ENCODE measurements at regions of chr15 and their contacts with region 1.

Region 1: GRCh38 chr15:99928429-99928981 is 195.3 kb upstream of the LYSMD4 start:
- DNase-seq: peak; percentile 61
- ATAC-seq: peak; percentile 87
- H3K4me3 ChIP-seq: peak overlapping the region; percentile 63
- H3K27ac ChIP-seq: no peak overlapping the region
- H3K4me1 ChIP-seq: peaks cover 15% of the 10 kb centered on the region
- H3K27me3 ChIP-seq: 0 out of 2 replicates have a peak, but pooled peaks cover under 1% of the 10 kb centered on the region
- CTCF ChIP-seq: peak; percentile 36; the same call in 1 of the 2 replicates

Region 2: GRCh38 chr15:99704444-99704838 is 224.1 kb before region 1 on chr15:
- CTCF ChIA-PET with region 1: no interaction called
- POLR2A ChIA-PET with region 1: no interaction called
- intact Hi-C with region 1: no loop called
- DNase-seq: peak; percentile 93
- ATAC-seq: peak; percentile 61
- H3K4me3 ChIP-seq: no peak overlapping the region
- H3K27ac ChIP-seq: no peak overlapping the region
- H3K4me1 ChIP-seq: peaks cover 33% of the 10 kb centered on the region
- H3K27me3 ChIP-seq: no peaks in the 10 kb centered on the region
- CTCF ChIP-seq: peak; percentile 73

Region 3: GRCh38 chr15:99961011-99961441 is 32.5 kb after region 1 on chr15:
- CTCF ChIA-PET with region 1: no interaction called
- POLR2A ChIA-PET with region 1: no interaction called
- intact Hi-C with region 1: loop called (anchors 2 kb)
- DNase-seq: peak; percentile 56
- ATAC-seq: no peak
- H3K4me3 ChIP-seq: no peak overlapping the region
- H3K27ac ChIP-seq: no peak overlapping the region
- H3K4me1 ChIP-seq: peaks cover 21% of the 10 kb centered on the region
- H3K27me3 ChIP-seq: no peaks in the 10 kb centered on the region
- CTCF ChIP-seq: peak; percentile 57

Region 4: DNA sequence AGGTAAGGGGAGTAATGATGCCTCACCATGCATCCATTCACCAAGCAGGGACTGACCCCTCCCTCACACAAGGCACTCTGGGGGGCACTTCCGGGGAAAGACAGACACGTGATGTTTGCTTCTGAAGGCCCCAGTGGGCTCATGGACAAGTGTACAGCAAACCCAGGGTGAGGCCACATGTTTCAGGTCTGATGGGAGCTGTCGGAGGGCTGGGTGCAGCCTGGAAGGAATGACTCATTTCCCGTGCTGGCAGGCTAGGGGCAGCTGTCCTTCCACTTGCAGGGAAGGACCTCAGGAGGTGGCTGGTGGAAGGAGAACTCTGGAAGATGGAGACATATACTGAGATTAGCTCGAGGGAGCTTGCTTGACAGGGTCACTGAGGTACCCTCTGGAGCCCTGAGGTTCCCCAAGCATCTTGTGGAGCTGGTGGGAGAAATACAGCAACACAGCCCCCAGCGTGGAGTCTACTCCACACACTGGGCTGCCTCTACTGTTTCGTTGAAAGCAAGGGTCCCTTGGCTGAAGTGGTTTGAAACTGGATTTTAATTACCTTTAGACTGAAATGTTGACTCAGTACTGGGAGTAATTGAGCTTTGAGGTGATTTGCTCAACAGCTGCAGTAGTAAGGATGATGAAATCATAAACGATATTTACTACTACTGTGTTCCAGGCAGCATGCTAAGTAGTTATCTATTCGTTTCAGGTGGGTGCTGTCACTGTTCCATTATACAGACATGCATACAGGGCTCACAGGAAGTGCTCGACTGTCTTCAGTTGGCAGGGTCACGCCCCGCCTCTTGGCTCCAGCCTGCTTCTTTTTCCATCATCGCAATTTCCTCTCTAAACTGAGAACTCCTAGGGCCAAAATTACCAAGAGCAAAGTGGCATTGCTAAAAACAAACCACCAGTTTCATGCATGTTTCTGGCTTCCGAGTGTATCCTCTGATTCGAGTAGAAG is 182.9 kb after region 1 on chr15:
- CTCF ChIA-PET with region 1: no interaction called
- POLR2A ChIA-PET with region 1: no interaction called
- intact Hi-C with region 1: loop called (anchors 10 kb)
- DNase-seq: peak; percentile 85
- ATAC-seq: peak; percentile 92
- H3K4me3 ChIP-seq: no peak overlapping the region
- H3K27ac ChIP-seq: peak overlapping the region; percentile 83
- H3K4me1 ChIP-seq: peaks cover 40% of the 10 kb centered on the region
- H3K27me3 ChIP-seq: no peaks in the 10 kb centered on the region
- CTCF ChIP-seq: no peak

Region 5: DNA sequence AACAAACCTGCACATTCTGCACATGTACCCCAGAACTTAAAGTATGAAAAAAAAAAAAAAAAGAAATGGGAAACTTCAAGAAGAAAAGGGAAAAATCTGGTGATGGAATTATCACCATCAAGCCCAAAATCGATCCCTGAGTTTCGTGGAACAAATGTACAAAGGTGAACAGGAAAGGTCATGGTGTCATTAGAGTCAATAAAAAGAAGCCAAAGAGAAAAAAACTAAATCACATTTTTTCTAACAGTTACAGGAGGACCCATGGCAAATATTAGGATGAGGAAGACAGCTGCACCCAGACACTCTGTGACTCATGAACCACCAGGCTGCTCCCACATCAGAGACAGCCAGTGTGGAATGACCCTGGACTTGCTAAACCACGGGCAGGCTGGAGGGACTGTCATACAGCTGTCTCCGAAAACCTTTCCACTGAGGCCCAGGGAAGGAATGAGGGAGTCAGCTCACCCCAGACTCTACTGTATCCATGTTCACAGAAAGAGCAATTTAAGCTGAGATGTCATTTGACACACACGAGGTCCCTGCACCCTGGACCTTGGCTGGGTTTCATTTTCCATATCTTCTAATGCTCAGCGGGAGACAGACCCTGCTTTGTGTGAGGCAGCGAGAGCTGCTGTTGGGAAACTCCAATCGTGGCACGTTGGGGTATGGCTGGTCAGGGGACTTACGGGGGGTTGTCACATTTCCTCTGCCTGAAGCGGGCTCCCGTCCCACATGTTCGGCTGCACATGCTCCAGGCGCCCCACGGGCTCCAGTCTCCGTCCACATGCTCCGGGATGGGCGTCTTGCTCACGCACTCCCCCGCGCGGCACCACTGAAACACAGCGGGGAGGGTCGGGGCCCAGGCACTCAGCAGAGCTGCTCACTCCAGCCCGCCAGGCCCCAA is 203.1 kb after region 1 on chr15:
- CTCF ChIA-PET with region 1: no interaction called
- POLR2A ChIA-PET with region 1: no interaction called
- intact Hi-C with region 1: loop called (anchors 2 kb)
- DNase-seq: peak; percentile 56
- ATAC-seq: peak; percentile 85
- H3K4me3 ChIP-seq: peak overlapping the region; percentile 59
- H3K27ac ChIP-seq: peak overlapping the region; percentile 45
- H3K4me1 ChIP-seq: peaks cover 6% of the 10 kb centered on the region; the same call in 1 of the 2 replicates
- H3K27me3 ChIP-seq: no peaks in the 10 kb centered on the region
- CTCF ChIP-seq: peak; percentile 62

Region 6: DNA sequence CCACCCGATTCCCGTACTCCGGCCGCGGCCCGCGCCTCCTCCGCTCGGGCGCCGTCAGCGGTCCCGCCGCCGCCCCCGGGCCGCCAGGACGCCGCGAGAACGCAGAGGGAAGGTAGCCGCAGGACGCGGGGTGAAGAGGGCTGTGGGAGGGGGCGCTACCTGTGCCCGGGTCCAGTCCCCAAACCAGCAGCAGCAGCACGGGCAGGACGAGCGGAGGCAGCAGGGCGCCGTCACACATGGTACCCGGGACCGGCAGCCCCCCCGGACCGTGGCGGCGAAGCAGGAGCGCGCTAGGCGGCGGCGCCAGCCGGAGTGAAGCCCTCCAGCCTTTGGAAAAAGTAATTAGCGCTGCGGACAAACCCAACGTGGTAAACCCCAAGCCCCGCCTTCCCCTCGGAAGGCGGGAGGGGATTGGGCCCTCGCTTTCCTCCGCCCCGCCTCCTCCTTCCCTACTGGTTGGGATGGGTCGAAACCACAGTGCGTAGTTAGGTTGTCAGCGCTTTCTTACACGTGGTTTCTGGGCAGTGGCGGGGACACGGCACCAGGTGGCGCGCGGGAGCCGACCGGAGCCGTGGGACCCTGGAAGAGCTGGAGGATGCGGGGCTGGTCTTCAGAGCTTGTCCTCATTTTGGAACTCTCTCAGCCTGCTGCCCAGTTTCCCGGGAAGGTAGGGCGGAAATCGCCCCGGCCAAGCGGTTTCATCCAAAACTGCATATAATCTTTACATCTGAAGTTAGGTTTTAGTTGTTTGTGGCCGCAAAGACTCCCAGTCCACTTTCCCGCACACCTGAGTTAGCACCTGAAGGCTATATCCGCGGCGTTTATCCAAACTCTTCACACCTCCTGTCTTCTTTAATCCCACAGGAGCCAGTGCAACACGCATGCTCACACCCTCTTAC is 413.4 kb after region 1 on chr15 and contains the start of gene ADAMTS17:
- CTCF ChIA-PET with region 1: interaction called, 6 read pairs
- POLR2A ChIA-PET with region 1: no interaction called
- intact Hi-C with region 1: loop called (anchors 2 kb)
- DNase-seq: peak; percentile 95
- ATAC-seq: peak; percentile 87
- H3K4me3 ChIP-seq: peak within 1 kb of the TSS; percentile 90
- H3K27ac ChIP-seq: no peak within 1 kb of the TSS
- H3K4me1 ChIP-seq: peaks cover 20% of the 10 kb centered on the region
- H3K27me3 ChIP-seq: no peaks in the 10 kb centered on the region
- CTCF ChIP-seq: peak; percentile 86
- total RNA-seq, gene ADAMTS17: 5.5 and 6.9 TPM in 2 replicates

Region 7: DNA sequence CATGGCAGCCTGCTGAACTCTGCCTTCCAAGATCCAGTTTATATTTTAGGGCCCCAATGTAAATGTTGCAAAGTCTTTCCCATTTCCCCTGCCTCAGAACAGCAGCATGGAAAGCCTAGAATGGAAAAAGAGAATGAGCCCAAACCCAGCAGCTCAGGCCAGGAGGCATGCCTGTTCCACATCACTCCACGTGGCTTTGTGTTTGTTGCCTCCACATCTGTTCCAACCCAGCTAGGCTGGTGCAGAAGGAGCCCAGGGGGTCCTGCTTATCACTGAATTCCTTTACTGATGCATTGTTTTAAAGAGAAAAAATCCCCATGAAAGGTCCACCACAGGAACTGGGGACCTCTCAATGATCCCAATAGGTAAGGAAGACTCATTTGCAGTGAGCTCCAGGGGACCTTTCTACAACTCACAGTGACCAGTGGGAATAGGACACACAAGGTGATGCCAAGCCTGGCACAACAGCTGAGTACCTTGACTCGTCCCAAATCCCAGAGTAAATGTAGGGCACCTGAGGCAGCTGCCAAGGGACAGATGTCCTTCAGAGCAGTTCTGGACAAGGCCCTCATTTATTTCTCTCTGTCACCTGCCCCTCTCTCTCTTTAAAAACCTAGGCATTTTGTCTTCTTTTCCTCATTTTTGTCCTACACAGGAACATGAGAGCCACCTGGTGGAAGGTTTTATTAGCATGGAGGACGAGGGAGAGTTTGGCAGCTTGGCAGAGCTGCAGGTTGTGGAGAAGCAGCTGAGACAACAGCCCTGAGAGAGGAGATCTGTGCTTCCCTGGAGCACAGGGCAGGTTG is 455.0 kb after region 1 on chr15:
- CTCF ChIA-PET with region 1: no interaction called
- POLR2A ChIA-PET with region 1: no interaction called
- intact Hi-C with region 1: loop called (anchors 5 kb)
- DNase-seq: peak; percentile 75
- ATAC-seq: peak; percentile 73
- H3K4me3 ChIP-seq: no peak overlapping the region
- H3K27ac ChIP-seq: no peak overlapping the region
- H3K4me1 ChIP-seq: no peaks in the 10 kb centered on the region
- H3K27me3 ChIP-seq: peaks cover 12% of the 10 kb centered on the region
- CTCF ChIP-seq: peak; percentile 80